AG04449 (cell line): ENCODE measurements at regions of chr12 and their contacts with region 1.

Region 1: GRCh38 chr12:6752921-6753771 is at the start of gene MLF2:
- DNase-seq: peak; percentile 96
- H3K4me3 ChIP-seq: peak within 1 kb of the TSS; percentile 93
- CTCF ChIP-seq: peak; percentile 94

Region 2: DNA sequence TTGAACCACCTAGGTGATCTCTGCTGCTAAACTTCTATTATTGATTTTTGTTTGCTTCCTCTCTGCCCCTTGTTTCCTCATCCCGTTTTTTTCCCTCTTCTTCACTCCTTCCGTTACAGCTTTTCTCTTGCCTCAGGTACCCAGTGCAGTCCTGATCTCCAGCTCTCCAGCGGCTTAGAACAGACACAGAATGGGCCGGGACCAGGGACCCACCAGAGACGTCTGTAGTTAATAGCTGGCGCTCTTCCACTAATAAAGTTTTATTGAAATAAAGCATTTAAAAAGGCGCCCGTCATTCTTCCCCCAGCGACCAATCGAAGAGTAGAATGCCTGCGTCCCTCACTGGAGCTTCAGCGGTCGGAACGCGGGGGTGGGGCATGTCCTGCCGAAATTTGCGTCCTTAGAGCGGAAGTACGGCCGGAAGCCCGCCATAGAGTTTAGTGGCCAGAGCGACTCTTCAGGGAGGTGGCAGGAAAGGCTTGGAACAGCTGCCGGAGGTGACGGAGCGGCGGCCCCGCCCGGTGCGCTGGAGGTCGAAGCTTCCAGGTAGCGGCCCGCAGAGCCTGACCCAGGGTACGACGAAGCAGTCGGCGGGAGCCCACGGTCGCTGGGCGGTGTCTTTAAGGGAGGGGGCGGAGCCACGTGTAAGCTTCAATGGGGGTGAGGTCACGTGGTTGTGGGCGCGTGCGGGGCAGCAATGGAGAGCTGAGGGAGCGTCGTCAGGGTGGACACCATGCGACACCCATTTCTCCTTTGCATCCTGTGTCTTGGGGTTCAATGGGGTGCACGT is 29.3 kb before region 1 on chr12 and contains the start of gene COPS7A:
- CTCF ChIA-PET with region 1: interaction called, 52 read pairs
- POLR2A ChIA-PET with region 1: interaction called, 30 read pairs
- DNase-seq: peak; percentile 84
- H3K4me3 ChIP-seq: peak within 1 kb of the TSS; percentile 56
- CTCF ChIP-seq: no peak

Region 3: GRCh38 chr12:6764011-6764828 is 11.1 kb after region 1 on chr12:
- CTCF ChIA-PET with region 1: interaction called, 222 read pairs
- POLR2A ChIA-PET with region 1: interaction called, 78 read pairs
- DNase-seq: peak; percentile 97
- H3K4me3 ChIP-seq: peak overlapping the region; percentile 16
- CTCF ChIP-seq: no peak

Region 4: DNA sequence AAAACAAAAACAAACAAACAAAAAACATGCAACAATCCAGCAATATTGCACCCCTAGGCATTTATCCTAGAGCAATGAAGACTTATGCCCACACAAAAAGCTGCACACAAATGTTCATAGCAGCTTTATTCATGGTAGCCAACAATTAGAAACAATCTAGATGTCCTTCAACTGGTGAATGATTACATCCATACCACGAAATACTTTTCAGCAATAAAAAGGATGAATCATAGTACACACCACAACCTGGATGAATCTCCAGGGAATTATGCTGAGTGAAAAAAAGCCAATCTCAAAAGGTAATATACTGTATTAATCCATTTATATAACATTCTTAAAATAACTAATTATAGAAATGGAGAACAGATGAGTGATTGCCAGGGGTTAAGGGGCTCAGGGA is 54.0 kb after region 1 on chr12:
- CTCF ChIA-PET with region 1: interaction called, 19 read pairs
- POLR2A ChIA-PET with region 1: no interaction called
- DNase-seq: no peak
- H3K4me3 ChIP-seq: no peak overlapping the region
- CTCF ChIP-seq: no peak

Region 5: GRCh38 chr12:6839482-6840201 is 86.5 kb after region 1 on chr12:
- CTCF ChIA-PET with region 1: interaction called, 304 read pairs
- POLR2A ChIA-PET with region 1: no interaction called
- DNase-seq: no peak
- H3K4me3 ChIP-seq: no peak overlapping the region
- CTCF ChIP-seq: no peak

Region 6: GRCh38 chr12:6873094-6874014 is 120.2 kb after region 1 on chr12 and contains the start of gene SPSB2:
- CTCF ChIA-PET with region 1: interaction called, 19 read pairs
- POLR2A ChIA-PET with region 1: interaction called, 12 read pairs
- DNase-seq: no peak
- H3K4me3 ChIP-seq: peak within 1 kb of the TSS; percentile 78
- CTCF ChIP-seq: no peak